ENCODE measurements at regions of chr11 and their contacts with region 1.

Region 1: DNA sequence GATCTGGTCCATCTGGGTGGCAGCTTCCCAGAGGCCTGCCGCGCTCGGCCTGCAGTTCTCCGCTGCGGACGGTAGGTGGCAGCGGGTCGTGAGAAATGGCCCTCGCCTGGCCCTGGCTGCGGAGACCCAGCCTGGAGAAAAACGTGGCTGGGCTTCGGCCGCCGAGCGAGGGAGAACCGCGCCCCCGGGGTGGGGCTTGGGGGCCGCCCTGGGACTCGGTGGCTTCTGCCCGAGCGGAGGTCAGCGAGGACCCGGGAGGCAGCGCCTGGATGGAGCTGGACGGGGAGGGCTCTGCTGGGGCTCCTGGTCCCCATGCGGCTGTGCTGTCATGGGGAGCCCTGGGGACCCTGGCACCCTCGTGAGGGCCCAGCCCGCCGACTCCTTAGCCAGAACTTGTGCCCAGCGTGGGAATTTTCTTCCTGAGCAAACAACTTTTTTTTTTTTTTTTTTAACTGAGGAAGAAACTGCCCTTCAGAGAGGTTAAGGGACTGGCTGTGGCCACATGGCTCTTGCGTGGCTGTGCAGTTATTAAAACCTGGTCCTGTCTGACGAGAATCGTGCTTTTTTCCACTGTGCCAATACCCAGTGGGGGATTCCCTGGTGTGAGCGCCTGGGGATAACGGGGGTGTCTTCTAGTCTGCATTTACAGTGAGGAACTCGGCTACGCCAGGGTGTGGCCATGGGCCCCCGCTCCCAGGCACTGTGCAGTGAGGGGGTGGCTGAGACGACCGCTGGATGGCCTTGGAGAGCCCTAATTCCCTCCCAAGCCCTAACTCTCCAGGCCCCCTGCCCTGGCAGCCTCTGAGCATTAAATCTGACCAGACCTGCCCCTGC is 535.6 kb downstream of the INSC start:
- DNase-seq: peak; percentile 96
- ATAC-seq: peak; percentile 99

Region 2: DNA sequence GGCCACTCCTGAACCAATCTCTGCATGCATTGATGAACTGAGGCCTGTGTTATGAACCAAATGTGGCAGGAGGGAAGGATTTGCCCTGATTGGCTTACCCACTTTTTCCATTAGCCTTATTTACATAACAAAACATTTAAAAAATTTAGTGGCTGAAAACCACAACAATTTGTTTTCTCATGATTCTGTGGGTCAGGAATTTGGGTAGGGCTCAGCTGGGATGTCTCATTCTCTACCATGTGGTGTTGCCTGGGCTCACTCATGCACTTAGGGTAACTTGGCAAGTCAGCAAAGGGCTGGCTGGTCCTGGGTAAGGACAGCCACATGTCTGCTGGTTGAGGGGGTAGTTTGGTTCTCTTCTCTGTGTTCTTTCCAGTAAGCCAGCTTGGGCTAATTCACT is 723.2 kb before region 1 on chr11:
- intact Hi-C with region 1: no loop called
- DNase-seq: no peak
- ATAC-seq: no peak

Region 3: GRCh38 chr11:15327786-15328231 is 322.5 kb before region 1 on chr11:
- intact Hi-C with region 1: loop called (anchors 10 kb)
- DNase-seq: no peak
- ATAC-seq: peak; percentile 77

Region 4: GRCh38 chr11:15692669-15693068 is 42.3 kb after region 1 on chr11:
- intact Hi-C with region 1: no loop called
- DNase-seq: no peak
- ATAC-seq: no peak

Region 5: GRCh38 chr11:15770798-15771414 is 120.6 kb after region 1 on chr11:
- intact Hi-C with region 1: loop called (anchors 2 kb)
- DNase-seq: no peak
- ATAC-seq: no peak

Region 6: DNA sequence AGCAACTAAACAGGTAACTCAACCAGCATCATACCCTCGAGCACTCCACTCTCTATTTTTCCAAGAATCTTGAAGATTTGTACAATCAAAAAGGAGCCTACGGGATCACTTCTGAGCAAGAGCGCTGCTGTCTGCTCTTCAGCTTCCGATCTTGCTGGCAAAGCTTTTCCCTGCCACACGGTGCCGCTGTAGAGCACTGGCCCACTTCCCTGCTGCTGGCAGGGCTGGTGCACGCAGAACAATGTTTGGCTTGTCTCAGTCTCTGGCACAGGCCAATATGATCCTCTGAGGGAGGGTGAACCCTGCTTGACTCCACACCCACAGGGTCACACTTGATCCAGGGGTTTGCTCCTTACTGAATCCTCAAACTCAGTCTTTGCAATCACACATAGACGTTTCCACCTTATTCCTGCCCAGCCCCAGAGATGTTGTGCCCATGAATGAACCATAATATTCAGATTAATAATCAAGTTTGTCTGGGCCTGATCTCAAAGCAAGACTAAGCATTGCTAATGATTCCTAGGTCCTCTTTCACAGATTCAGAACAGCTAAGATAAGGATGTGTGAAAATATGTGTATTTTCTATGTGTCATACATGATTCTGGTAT is 169.5 kb after region 1 on chr11:
- intact Hi-C with region 1: loop called (anchors 2 kb)
- DNase-seq: peak; percentile 88
- ATAC-seq: peak; percentile 94

Region 7: DNA sequence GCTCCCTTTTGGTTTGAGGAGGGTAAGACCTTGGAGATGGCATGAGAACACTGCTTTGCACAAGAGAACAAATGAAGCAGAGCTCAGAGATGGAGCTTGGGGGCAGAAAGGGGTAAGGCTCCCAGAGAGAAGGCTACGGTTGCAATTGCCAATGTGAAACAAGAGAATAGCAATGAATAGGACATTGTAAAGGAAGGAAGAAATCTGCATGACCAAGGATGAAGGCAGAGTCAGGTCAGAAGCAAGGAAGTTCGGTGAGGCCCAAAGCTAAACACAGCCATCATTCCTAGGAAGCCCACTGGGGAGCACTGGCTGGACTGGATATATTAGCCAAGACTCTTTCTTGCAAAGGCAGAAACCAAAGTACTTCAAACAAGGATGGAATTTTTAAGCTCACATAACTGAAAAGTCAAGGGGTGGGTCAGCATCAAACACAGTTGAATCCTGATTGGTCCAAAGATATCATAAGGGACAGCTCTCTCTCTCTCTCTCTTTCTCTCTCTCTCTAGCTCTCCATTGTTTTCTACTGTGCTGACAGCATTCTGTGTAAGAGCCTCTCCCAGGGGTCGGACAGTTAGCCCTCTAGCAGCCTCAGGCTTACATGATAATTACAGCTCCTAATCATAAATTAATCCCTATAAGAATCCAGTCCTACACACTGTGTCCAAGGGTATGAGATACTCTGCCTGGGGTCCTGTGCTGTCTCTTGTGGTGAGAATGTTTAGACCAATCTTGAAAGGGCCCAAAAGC is 221.8 kb after region 1 on chr11:
- intact Hi-C with region 1: no loop called
- DNase-seq: no peak
- ATAC-seq: no peak

Region 8: DNA sequence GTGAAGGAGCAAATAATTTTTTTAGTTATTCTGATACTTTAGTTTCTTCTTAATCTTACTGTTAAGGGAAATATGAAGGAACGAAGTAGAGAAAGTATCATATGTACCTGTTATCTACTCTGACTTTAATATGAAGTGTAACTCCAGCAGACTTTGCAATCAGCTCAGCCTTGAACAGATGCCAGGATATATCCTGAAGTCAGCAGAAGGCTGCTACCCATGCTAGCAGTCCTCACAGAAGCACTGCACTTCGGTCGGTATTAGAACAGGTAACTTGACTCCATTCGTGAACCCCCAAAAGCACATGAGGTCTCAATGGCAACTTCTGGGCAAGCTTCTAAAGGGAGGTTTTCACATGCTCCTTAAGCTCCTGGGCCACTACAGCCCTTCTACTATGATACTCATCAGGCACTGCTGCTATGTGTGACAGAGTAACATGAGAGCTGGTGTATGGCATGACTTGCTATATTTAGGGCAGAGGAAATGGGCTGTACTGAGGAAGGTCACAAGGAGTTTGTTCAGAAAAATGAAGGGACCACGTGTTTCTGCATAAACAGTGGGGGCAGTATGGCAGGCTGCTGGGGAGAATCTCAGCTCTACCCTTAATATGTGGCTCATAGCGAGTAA is 361.9 kb after region 1 on chr11:
- intact Hi-C with region 1: no loop called
- DNase-seq: no peak
- ATAC-seq: no peak

Region 9: GRCh38 chr11:16738193-16738946 is 1088.0 kb after region 1 on chr11 and contains the start of gene C11orf58:
- intact Hi-C with region 1: loop called (anchors 5 kb)
- DNase-seq: peak; percentile 96
- ATAC-seq: peak; percentile 98
- total RNA-seq, gene C11orf58: 102 TPM

Measured in Right ventricle myocardium inferior (tissue), 1 donor.